Endothelial cell of umbilical vein (primary cell): ENCODE measurements at regions of chr11 and their contacts with region 1.

Region 1: DNA sequence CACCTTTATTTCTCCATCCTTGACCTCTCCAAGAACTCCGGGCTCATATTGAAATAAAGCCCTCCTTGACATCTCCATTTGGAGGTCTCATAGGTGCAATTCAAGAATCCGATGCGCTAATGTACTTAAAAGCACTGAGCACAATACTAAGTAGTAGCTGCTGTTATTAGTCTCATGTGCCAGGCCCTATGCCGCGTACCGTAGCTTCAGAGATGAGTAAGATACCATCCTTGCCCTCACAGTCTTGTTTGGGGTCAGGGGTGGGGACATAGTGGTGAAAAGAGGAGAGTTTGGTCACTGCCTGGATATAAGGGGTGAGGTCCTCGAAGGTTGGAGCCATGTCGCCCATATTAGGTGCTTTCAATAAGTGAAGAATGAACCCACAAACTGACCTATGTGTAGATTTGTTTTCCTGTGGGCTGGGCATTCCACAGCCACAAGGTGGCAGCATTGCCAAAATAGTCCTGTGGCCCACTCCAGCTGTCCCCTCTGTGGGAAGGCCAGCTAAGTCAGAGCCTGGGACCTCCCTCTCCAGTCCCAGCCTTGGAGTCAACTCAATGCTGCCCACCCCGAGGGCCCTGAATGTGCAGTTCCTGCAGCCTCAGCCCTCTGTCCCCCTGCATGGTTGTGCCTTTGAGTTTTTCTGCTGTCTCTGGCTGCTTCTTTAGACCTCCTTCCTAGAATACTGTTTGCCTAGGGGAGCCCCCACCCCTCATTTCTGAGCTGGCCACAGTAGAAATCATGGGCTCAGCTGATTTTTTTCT is 6.5 kb downstream of the DCPS start:
- DNase-seq: peak; percentile 78
- H3K4me3 ChIP-seq: no peak overlapping the region
- H3K27ac ChIP-seq: no peak overlapping the region
- H3K4me1 ChIP-seq: no peaks in the 10 kb centered on the region
- H3K27me3 ChIP-seq: no peaks in the 10 kb centered on the region
- CTCF ChIP-seq: peak; percentile 89 to 91
- POLR2A ChIP-seq: no peak

Region 2: GRCh38 chr11:126355324-126355925 is 45.0 kb after region 1 on chr11 and contains the start of gene ST3GAL4:
- CTCF ChIA-PET with region 1: interaction called, 37 read pairs
- POLR2A ChIA-PET with region 1: no interaction called
- dilution Hi-C with region 1: no loop called
- intact Hi-C with region 1: loop called (anchors 2 kb)
- DNase-seq: peak; percentile 73
- H3K4me3 ChIP-seq: peak within 1 kb of the TSS; percentile 16 to 69 (median 64)
- H3K27ac ChIP-seq: peak within 1 kb of the TSS; percentile 79
- H3K4me1 ChIP-seq: peaks cover 23% of the 10 kb centered on the region
- H3K27me3 ChIP-seq: no peaks in the 10 kb centered on the region
- CTCF ChIP-seq: no peak
- POLR2A ChIP-seq: peak; percentile 82
- total RNA-seq, gene ST3GAL4: 17.7 and 21.1 TPM in 2 replicates

Region 3: DNA sequence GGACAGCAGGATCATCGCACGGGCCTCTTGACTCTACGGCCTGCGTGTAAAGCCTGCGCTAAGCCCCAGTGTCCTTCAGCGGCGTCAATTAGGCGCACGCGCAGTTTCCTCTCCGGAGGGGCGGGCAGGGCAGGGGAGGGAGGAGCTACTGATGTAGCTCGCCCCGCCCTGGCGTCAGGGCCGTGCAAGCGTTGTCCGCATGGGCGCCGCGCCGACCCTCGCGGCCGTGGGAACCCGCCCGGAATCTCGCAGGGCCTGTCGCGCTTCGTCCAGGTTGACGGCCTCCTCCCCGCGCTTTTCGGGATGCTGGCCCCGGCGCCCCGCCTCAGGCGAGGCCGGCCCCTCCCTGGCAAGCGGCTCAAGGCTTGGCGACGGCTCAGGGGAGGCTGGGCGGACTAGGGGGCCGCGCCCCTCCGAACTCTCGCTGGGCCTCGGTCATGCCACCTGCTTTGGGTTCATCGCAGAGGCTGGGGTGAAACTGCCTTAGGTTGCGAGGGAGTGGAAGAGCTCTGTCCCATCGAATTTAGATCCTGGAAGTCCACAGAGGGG is 106.2 kb after region 1 on chr11:
- CTCF ChIA-PET with region 1: interaction called, 16 read pairs
- POLR2A ChIA-PET with region 1: interaction called, 3 read pairs
- dilution Hi-C with region 1: no loop called
- intact Hi-C with region 1: loop called (anchors 5 kb)
- DNase-seq: peak; percentile 91
- H3K4me3 ChIP-seq: peak overlapping the region; percentile 44 to 47 (median 44)
- H3K27ac ChIP-seq: peak overlapping the region; percentile 57
- H3K4me1 ChIP-seq: peaks cover 11% of the 10 kb centered on the region
- H3K27me3 ChIP-seq: no peaks in the 10 kb centered on the region
- CTCF ChIP-seq: no peak
- POLR2A ChIP-seq: peak; percentile 76

Region 4: DNA sequence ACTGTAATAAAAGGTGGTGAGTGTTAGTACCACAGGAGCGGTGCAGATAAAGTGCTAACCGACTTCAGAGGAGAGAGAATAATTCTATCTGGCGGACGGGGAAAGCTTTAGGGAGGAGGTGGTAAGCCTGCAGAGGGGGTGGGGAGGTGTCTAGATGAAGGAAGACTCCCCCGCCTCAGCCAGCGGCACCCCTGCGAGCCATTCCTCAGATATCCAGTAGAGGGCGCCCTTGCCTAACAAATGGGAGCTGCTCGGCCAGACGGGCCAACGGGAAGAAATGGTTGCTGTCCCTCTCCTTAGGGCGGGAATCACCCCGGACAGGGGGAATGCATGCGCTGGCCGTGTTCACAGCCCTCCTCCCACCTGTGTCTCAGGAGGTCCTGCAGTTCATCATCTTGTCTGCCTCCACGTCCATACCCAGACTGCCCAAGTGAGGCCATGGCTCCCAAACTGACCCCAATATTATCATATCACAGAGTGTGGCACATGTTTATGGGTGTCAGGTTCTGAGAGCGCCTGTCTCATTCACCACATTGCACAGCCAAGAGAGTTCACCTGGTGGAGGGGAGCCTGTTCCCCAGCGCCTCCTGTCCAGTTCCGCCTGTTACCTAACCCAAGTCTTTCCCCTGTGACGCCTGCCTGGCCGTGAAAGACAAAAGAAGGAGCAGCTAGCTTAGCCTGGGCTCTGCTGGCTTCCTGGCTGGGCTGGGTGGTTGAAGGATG is 130.5 kb after region 1 on chr11:
- CTCF ChIA-PET with region 1: interaction called, 64 read pairs
- POLR2A ChIA-PET with region 1: no interaction called
- dilution Hi-C with region 1: no loop called
- intact Hi-C with region 1: loop called (anchors 1 kb)
- DNase-seq: peak; percentile 74
- H3K4me3 ChIP-seq: no peak overlapping the region
- H3K27ac ChIP-seq: no peak overlapping the region
- H3K4me1 ChIP-seq: no peaks in the 10 kb centered on the region
- H3K27me3 ChIP-seq: no peaks in the 10 kb centered on the region
- CTCF ChIP-seq: peak; percentile 84 to 88
- POLR2A ChIP-seq: no peak

Region 5: GRCh38 chr11:126989942-126990715 is 679.7 kb after region 1 on chr11:
- CTCF ChIA-PET with region 1: interaction called, 13 read pairs
- POLR2A ChIA-PET with region 1: no interaction called
- dilution Hi-C with region 1: no loop called
- intact Hi-C with region 1: loop called (anchors 1 kb)
- DNase-seq: peak; percentile 35
- H3K4me3 ChIP-seq: no peak overlapping the region
- H3K27ac ChIP-seq: no peak overlapping the region
- H3K4me1 ChIP-seq: no peaks in the 10 kb centered on the region
- H3K27me3 ChIP-seq: no peaks in the 10 kb centered on the region
- CTCF ChIP-seq: peak; percentile 76 to 96
- POLR2A ChIP-seq: no peak